Ascending aorta (tissue), 2 donors: ENCODE measurements at regions of chr1 and their contacts with region 1.

Region 1: GRCh38 chr1:235504496-235505222 is 407 bp upstream of the B3GALNT2 start:
- DNase-seq: peak; percentile 94 to 100
- H3K4me3 ChIP-seq: peak overlapping the region; percentile 75 to 94
- H3K27ac ChIP-seq: peak overlapping the region; percentile 98 to 99
- H3K4me1 ChIP-seq: peaks cover 0 to 20% of the 10 kb centered on the region in 2 donors
- H3K27me3 ChIP-seq: no peaks in the 10 kb centered on the region
- CTCF ChIP-seq: peak; percentile 82 to 95 (median 94)

Region 2: DNA sequence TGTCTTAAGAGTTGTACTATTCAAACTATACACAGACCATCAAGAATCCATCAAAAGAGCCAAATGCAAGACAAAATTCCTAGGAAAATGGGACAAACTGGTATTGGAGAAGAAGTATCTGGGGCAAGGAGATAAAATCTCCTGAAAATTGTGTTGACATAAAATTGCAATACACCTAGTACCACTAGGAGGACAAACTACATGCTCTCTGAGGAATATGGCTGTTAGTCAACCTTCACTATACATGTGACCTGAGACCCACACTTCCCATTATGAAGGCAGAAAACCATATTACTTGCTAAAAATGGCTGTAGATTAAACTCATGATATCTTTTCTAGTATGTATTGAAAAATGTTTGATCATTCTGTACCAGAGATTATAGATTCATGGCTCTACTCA is 924.7 kb before region 1 on chr1:
- intact Hi-C with region 1: loop called (anchors 10 kb)
- DNase-seq: no peak
- H3K4me3 ChIP-seq: no peak overlapping the region
- H3K27ac ChIP-seq: no peak overlapping the region
- H3K4me1 ChIP-seq: peaks cover 8 to 32% of the 10 kb centered on the region in 2 donors
- H3K27me3 ChIP-seq: no peaks in the 10 kb centered on the region
- CTCF ChIP-seq: no peak

Region 3: DNA sequence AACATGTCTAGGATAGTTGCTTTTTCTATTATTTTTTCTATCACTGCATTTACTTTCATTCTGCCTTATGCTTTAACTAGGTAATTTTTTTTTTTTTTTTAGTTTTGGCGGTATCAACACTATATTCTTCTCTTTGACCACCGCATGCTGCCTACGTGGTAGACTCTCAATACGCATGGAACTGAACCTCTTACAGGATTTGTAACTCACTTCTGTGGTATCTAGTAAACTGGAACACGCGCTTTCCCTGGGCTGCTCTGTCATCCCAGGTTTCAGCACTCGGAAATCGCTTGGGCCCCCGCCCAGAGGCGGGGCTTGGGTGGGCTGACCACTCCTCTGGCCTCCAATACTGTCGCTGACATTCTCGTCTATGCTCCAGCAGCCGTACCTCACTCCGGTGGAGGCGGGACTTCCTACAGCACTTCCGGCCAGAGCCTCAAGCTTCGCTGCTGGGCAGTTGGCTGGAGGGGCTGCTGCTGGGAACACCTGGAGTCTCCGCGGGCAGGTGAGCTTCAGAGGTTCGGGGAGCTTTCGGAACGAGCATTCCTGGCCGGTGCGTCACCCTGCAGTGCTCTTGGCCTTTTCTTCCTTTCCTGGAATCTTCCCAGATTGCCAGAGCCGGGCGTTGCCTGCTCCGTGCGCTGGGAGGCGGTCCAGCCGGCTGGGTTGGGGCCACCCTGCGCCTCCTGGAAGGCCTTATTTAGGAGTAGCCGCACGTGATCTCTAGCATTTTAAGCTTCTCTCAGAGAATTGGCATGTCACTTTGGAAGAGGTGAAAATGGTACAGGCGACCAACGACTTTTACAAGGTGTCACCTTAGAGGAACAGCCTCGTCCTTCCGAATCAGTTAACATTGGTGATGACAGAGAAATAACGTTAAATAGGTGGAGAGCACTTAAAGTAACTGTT is 137.4 kb before region 1 on chr1 and contains the start of gene TBCE:
- intact Hi-C with region 1: loop called (anchors 1 kb)
- DNase-seq: peak; percentile 86 to 99
- H3K4me3 ChIP-seq: peak within 1 kb of the TSS; percentile 68 to 77
- H3K27ac ChIP-seq: peak within 1 kb of the TSS; percentile 68 to 70
- H3K4me1 ChIP-seq: peaks cover 0 to 5% of the 10 kb centered on the region in 2 donors
- H3K27me3 ChIP-seq: no peaks in the 10 kb centered on the region
- CTCF ChIP-seq: peak in 1 of 3 experiments; percentile 16
- total RNA-seq, gene TBCE: 67.8 TPM

Region 4: GRCh38 chr1:235391874-235392273 is 112.8 kb before region 1 on chr1:
- intact Hi-C with region 1: no loop called
- DNase-seq: no peak
- H3K4me3 ChIP-seq: no peak overlapping the region
- H3K27ac ChIP-seq: no peak overlapping the region
- H3K4me1 ChIP-seq: no peaks in the 10 kb centered on the region
- H3K27me3 ChIP-seq: no peaks in the 10 kb centered on the region
- CTCF ChIP-seq: no peak

Region 5: DNA sequence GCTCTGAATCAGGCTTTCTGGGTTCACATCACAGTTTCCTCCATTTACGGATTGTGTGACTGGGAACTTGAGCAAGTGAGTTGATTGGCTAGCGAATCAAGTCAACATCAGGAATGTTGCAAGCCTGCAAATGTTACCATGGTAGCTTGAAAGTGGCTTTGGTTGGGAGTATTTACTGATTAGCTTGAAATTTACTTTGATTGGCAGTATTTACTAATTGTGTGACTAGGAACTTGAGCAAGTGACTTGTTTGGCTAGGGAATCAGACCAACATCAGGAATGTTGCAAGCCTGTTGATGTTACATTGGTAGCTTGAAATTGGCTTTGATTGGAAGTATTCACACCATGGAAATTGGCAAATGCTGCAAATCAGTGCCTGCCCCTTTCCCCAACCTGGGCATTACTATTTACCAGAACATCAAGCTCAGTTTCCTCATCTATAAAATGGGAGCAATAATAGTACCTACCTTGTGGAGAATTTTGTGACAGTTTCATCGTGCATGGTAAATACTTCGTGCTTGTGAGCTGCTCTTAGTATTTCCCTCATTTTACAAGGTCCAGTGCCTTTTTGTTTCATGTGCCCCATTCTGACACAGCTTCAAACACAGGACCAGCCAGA is 22.6 kb after region 1 on chr1:
- intact Hi-C with region 1: no loop called
- DNase-seq: no peak
- H3K4me3 ChIP-seq: no peak overlapping the region
- H3K27ac ChIP-seq: no peak overlapping the region
- H3K4me1 ChIP-seq: no peaks in the 10 kb centered on the region
- H3K27me3 ChIP-seq: no peaks in the 10 kb centered on the region
- CTCF ChIP-seq: no peak

Region 6: DNA sequence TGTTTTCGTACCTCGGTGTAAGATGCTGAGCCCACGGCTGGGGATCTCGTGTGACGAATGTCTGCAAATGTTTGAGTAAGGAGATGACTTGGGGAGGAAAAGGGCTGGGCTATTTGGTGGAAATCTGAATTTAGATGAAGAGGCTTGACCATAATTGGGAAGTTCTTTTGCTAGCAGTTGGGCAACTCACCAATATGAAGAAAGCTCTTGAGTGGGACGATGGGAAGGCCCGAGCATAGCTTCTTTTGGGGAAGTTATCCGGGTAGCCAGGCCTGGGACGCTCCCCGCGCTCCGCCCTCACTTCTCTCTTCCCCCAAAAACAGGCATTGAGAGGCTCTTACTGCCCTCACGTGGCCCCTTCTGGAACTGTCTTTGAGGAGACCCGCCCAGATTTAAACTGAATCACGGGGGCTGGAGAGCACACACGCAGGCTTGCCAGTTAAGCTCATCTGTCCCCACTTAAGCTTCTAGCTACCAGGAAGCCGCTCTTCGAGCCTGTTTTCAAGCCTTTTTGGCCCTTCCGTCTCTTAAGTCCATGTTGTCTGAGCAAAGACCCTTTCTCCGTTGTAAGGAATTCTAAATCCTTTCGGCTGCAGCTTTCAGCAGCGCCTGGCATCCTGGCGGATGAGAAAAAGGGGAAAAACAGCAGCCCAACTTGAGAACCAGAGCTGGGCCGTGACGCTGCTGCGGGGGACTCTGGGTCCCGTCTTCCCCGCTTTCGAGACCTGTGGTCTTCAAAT is 467.1 kb after region 1 on chr1:
- intact Hi-C with region 1: loop called (anchors 5 kb)
- DNase-seq: peak; percentile 83 to 97
- H3K4me3 ChIP-seq: peak overlapping the region; percentile 52 to 66
- H3K27ac ChIP-seq: peak overlapping the region; percentile 95 to 96
- H3K4me1 ChIP-seq: peaks cover 4 to 20% of the 10 kb centered on the region in 2 donors
- H3K27me3 ChIP-seq: no peaks in the 10 kb centered on the region
- CTCF ChIP-seq: peak; percentile 78 to 85 (median 84)

Region 7: DNA sequence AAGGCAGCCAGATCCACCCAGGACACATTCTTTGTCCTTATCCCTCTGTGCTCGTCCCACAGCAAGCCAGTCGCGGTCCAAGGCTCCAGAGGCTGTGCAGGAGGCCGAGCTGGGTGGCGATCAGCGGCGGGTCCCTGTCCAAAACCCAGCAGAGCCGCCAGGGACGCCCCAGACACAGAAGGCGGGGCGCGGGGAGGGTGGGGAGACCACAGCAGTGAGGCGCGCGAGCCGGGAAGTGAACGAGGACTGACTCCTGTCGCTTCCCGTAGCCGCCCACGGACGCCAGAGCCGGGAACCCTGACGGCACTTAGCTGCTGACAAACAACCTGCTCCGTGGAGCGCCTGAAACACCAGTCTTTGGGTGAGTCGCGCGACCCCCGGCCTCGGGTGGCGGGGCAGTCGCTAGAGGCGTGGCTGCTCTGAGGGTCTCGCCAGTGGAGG is 1019.1 kb after region 1 on chr1 and contains the start of gene LGALS8:
- intact Hi-C with region 1: loop called (anchors 5 kb)
- DNase-seq: peak; percentile 72 to 95
- H3K4me3 ChIP-seq: peak within 1 kb of the TSS; percentile 68 to 78
- H3K27ac ChIP-seq: peak within 1 kb of the TSS; percentile 77 to 88
- H3K4me1 ChIP-seq: peaks cover 0 to 6% of the 10 kb centered on the region in 2 donors
- H3K27me3 ChIP-seq: no peaks in the 10 kb centered on the region
- CTCF ChIP-seq: no peak
- total RNA-seq, gene LGALS8: 45.8 TPM